IMR-90 (cell line): ENCODE measurements at regions of chr7 and their contacts with region 1.

Region 1: DNA sequence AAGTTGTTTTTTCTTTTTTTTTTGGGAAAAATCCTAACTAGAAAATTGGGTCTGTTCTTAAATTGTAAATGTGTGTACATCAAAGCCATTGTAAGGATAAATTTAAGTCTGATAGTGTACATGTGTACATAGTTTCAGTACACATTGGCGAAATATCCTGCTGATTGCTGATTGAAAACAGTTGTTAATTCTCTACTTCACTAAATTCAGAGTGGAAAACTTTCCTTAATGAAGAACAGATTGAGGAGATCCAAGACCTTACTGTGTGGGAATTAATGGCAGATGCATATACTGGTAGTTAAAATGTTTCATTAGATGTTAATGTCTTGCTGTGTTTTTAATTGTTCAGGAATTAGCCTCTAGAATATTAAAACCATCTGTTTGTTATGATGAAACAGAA is 506.0 kb downstream of the AUTS2 start:
- DNase-seq: no peak
- ATAC-seq: no peak
- H3K4me3 ChIP-seq: no peak overlapping the region
- H3K27ac ChIP-seq: no peak overlapping the region
- H3K4me1 ChIP-seq: no peaks in the 10 kb centered on the region
- H3K27me3 ChIP-seq: no peaks in the 10 kb centered on the region
- CTCF ChIP-seq: no peak
- POLR2A ChIP-seq: no peak
- RAD21 ChIP-seq: no peak

Region 2: DNA sequence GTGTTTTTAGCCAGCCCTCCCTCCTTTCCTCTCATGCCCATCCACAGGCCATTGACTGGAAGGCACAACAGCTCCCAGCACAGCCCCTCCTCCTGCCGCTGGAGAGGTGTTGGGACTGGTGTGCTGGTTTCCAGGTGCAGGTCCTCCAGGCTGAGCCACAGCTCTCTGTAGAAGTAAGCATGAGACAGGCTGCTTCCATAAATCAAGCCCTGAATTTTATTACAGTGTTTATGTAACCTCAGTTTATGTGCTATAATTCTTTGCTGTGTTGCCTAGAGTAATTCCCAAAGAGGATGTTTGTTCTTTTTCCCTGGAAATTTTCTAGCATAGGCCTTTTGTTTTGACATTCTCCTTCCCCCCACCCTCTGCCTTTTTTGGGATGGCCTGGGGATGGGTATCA is 60.2 kb before region 1 on chr7:
- CTCF ChIA-PET with region 1: no interaction called
- POLR2A ChIA-PET with region 1: no interaction called
- dilution Hi-C with region 1: no loop called
- in situ Hi-C with region 1: no loop called
- intact Hi-C with region 1: no loop called
- DNase-seq: no peak
- ATAC-seq: no peak
- H3K4me3 ChIP-seq: no peak overlapping the region
- H3K27ac ChIP-seq: no peak overlapping the region
- H3K4me1 ChIP-seq: no peaks in the 10 kb centered on the region
- H3K27me3 ChIP-seq: no peaks in the 10 kb centered on the region
- CTCF ChIP-seq: no peak
- POLR2A ChIP-seq: no peak
- RAD21 ChIP-seq: no peak

Region 3: DNA sequence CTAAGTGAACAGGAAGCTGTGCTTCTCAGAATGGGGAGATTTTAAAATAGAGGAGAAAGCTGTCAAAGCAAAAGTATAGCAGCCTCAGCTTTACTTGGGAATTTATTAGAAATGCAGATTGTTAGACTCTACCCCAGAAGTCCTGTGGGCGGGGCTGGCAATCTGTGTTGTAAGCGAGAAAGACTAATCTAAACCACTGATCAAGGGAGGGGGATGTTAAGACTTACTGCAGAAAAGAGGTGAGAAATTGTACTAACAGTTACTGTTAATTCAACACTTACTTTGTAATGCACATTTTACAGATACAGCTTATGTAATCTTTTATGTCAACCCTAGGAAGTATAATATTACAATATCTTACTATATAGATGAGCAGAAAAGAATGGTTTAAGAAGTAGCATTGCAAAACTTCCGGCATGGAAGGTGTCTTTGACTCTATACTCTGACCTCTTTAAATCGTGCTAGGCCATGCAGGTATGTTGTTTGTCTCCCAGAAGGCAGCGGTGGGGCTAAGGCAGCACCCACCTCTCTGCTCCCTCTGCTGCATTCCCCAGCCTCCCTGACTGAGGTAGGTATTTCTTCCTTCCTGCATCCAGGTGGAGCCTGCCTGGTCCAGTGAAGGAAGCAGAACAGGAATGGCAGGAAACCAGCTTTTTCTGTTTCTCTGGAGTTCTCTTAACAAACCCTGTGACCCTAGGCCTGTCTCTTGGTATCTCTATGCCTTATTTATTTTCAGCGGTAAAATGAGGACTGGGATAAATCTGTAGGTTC is 43.8 kb before region 1 on chr7:
- CTCF ChIA-PET with region 1: no interaction called
- POLR2A ChIA-PET with region 1: no interaction called
- dilution Hi-C with region 1: no loop called
- in situ Hi-C with region 1: no loop called
- intact Hi-C with region 1: no loop called
- DNase-seq: no peak
- ATAC-seq: no peak
- H3K4me3 ChIP-seq: no peak overlapping the region
- H3K27ac ChIP-seq: no peak overlapping the region
- H3K4me1 ChIP-seq: no peaks in the 10 kb centered on the region
- H3K27me3 ChIP-seq: no peaks in the 10 kb centered on the region
- CTCF ChIP-seq: no peak
- POLR2A ChIP-seq: no peak
- RAD21 ChIP-seq: no peak

Region 4: DNA sequence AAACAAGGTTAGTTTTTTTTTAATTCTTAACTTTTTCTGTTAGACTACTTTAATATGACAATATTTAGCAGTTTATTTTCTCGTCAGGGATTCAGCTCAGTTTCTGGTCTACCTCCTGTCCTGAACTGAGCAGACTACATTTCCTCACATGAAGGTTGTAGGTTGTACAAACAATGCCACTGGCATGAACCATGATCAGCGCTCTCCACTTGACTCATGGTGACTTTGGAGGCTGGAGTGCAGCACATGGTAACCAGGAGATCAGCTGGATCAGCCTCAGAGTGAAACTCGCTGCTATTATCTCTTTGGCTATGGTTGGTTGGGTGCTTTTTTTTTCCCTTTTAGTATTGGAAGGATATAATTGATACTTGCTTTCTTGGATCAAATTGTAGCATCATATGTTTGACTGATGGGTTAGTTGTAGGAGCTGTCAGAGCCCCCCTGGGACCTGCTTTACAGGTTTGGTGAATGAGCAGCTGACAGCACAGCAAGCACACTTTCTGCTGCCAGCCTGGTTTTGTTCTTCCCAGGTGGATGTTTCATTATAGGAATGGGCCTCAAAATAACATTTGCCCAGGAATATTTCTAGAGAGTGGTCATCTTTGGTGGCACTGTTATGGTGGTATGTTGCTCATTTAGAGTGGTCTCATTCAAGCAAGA is 50.4 kb after region 1 on chr7:
- CTCF ChIA-PET with region 1: no interaction called
- POLR2A ChIA-PET with region 1: no interaction called
- dilution Hi-C with region 1: no loop called
- in situ Hi-C with region 1: no loop called
- intact Hi-C with region 1: loop called (anchors 5 kb)
- DNase-seq: no peak
- ATAC-seq: no peak
- H3K4me3 ChIP-seq: no peak overlapping the region
- H3K27ac ChIP-seq: no peak overlapping the region
- H3K4me1 ChIP-seq: no peaks in the 10 kb centered on the region
- H3K27me3 ChIP-seq: no peaks in the 10 kb centered on the region
- CTCF ChIP-seq: no peak
- POLR2A ChIP-seq: no peak
- RAD21 ChIP-seq: no peak